ENCODE measurements at regions of chr2 and their contacts with region 1.

Region 1: DNA sequence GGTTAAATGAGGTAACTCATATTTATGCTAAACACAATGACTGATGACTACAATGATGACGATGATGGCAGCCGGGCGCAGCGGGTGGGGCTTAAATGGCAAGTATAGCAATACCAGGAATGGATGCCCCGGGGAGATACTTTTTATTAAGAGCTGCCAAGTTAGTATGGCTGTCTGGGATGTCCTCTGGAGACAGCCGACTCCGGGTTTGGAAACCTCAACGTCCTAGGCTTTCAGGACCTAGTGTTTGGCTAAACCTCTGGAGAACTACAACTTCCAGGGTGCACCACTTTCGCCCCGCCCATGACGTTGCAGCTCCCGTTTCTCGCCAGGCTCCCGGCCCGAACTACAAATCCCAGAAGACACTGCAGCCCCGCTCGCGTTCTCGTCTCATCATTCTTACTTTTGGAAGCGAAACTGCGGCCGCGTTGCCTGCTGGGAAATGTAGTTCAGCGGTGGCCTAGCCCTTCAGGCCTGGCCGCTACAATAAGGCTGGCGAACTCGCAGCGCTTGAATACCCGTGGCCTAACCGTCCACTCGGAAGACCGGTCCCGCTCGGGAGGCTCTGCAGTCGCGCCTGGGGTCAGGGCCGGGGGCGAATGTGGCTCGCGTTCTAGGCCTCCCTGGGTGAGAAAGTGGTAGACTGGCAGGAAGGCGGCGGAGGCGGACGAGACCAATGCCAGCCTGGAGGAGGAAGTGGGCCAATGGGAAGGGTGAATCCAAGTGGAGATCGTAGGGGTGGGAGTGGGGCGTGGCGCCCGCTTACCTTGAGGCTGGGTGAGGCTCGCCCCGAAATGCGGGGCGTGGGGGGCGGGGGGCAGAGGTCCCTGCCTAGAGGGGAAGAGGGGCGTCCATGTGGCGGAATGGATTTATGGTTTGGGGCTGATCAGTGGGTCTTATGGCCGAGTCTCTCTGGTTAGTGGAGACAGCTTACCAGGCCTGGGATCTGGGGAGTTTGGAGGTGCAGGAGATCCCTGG is at the start of gene SMARCAL1:
- DNase-seq: peak; percentile 100
- total RNA-seq, gene SMARCAL1: 13.2 TPM

Region 2: GRCh38 chr2:216215658-216216390 is 196.5 kb before region 1 on chr2:
- intact Hi-C with region 1: loop called (anchors 5 kb)
- DNase-seq: no peak

Region 3: DNA sequence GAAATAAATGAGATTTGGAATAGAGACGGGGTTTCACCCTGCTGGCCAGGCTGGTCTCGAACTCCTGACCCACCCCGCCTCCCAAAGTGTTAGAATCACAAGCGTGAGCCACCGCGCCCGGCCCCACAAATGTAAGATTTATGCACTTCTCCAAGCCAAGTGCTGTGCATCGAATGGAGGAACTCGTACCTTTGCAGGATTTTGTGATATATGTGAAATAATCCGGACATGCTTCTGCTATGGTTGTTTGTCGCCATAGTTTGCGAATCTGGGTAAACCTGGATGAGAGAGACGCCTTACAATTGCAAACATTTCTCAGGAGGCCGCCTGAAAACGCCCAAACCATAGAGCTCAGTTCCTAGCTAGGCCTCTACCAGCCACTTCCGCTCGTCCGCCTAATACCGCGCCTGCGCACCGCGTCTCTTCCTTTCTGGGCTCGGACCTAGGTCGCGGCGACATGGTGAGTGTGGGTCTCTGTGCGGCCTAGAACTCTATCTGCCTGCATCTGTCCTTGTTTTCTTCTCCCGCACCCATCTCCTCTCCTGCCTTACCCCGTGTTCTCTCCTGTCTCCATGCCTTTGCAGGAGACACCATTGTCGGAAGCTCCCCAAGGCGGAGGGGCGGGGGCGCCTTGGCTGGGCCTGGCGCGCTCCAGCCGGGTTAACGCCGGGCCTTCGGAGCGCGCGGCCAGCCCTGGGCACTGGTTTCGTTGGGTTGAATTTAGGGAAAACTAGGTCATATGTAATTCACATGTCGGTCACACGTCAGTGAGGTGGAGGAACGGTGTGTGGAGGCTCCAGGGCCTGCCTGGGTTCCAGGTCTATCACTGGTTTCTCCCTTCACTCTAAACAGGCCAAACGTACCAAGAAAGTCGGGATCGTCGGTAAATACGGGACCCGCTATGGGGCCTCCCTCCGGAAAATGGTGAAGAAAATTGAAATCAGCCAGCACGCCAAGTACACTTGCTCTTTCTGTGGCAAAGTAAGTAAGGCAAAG is 86.4 kb after region 1 on chr2 and contains the start of gene RPL37A:
- intact Hi-C with region 1: loop called (anchors 2 kb)
- DNase-seq: peak; percentile 96
- total RNA-seq, gene RPL37A: 1,531 TPM